GM13976 (cell line): ENCODE measurements at regions of chrX and their contacts with region 1.

Region 1: DNA sequence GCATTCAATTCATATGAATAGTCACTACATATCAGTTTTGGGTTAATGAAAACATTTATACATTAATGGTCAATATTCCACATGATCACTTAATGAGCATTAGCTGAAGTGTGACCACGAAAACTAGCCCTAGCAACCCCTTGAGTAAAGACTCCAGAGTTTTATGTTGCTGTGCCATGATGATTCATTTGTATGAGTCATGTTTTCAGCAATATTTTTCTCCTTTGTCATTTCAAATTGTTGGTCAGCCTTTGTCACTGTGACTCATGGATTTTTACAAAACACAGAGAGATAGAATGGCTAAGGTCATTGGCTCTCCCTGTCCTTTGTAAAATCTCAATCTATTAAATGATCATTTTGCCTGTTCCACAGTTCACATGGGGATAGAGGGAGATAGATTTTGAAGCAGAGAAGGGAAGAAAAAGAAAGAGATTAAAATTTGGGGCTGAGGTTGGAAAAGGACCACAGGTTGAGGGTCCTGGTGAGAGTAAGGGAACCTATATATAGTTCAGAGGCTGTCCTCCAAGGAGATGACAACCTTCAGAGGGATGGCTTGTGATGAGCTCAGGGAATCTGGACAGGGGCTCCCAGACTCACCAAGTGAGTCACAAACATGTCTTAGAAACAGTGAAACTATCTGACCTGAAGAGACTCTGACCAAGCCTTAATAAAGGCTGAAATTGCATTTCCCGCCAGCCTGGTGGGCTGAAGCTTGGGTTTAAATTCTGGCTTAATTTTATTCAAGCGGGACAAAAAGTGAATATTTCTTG is 25.6 kb downstream of the NR0B1 start:
- DNase-seq: no peak
- CTCF ChIP-seq: no peak

Region 2: GRCh38 chrX:30495468-30495867 is 211.9 kb after region 1 on chrX:
- in situ Hi-C with region 1: loop called (anchors 10 kb)
- DNase-seq: no peak
- CTCF ChIP-seq: no peak